ENCODE measurements at regions of chr12 and their contacts with region 1.

Region 1: GRCh38 chr12:14716848-14717444 is 20.5 kb upstream of the GUCY2C start:
- DNase-seq: no peak
- H3K4me3 ChIP-seq: no peak overlapping the region
- H3K27ac ChIP-seq: no peak overlapping the region
- H3K4me1 ChIP-seq: peaks cover 0 to 11% (median 5%) of the 10 kb centered on the region in 4 donors
- H3K27me3 ChIP-seq: no peaks in the 10 kb centered on the region
- CTCF ChIP-seq: peak in 3 of 4 experiments; percentile 31 to 45 (median 40)
- EP300 ChIP-seq: no peak
- POLR2A ChIP-seq: no peak

Region 2: DNA sequence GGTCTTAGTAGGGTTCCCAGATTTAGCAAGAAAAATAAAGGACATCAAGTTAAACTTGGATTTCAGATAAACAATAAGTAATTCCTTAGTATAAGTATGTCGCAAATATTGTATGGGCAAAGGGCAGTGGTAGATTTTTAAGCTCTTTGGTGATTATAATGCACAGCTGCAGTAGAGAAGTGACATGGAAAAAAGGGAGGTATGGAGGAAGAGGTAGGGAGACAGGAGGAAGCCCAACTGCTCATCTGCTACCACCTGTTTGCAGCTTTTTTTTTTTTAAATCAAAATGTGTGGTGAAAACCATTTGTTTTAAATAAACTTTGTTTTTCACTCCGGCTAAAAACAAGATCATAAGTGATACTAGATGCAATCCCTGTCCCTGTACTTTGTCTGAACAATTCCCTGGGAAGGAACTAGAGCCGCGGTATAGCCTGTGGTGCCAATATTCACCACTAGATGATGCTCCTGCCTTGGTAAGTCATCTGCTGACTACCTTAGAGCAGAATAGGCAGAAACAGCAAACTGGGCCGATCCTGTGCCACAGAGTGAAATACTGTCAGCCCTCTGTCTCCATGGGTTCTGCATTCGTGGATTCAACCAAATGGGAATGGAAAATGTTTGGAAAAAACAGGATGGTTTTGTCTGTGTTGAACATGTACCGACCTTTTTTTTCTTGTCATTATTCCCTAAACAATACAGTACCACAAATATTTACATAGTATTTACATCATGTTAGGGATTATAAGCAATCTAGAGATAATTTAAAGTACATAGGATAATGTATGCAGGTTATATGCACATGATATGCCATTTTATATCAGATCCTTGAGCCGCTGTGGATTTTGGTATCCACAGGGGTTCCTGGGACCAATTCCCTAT is 86.9 kb before region 1 on chr12:
- intact Hi-C with region 1: loop called (anchors 2 kb)
- DNase-seq: peak; percentile 78
- H3K4me3 ChIP-seq: no peak overlapping the region
- H3K27ac ChIP-seq: no peak overlapping the region
- H3K4me1 ChIP-seq: peaks cover 0 to 3% (median 0%) of the 10 kb centered on the region in 4 donors
- H3K27me3 ChIP-seq: no peaks in the 10 kb centered on the region
- CTCF ChIP-seq: peak; percentile 93 to 98 (median 97)
- EP300 ChIP-seq: no peak
- POLR2A ChIP-seq: no peak

Region 3: DNA sequence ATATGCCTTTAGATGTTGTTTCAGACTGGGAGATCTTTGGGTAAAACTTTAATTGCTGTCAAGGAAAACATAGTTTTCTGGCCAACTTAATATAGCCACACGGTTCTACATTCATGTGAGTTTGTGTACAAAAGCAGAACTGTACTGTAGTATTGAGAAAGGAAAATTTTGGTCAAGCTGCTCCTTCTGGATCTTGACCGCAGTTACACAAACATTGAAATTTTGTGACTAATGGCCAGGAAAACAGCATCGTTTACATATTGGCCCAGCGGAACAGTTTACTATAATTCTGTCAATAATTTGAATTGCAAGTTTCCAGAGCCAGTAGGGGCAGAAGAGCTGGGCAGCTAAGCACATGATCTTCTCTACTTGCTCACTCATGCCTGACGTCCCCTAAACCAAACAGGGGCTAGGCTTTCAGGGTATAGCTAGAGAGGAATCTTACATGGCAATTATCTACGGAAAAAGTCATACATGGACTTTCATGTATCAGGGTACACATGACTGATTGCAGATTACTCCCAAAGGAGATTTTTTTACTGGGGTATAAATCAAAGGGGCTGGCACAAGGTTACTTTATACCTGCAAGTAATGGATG is 137.7 kb after region 1 on chr12:
- intact Hi-C with region 1: no loop called
- DNase-seq: no peak
- H3K4me3 ChIP-seq: no peak overlapping the region
- H3K27ac ChIP-seq: peak overlapping the region in 1 of 4 donors; percentile 15
- H3K4me1 ChIP-seq: peaks cover 0 to 9% (median 0%) of the 10 kb centered on the region in 4 donors
- H3K27me3 ChIP-seq: no peaks in the 10 kb centered on the region
- CTCF ChIP-seq: no peak
- EP300 ChIP-seq: no peak
- POLR2A ChIP-seq: no peak

Measured in sigmoid colon (tissue), 7 donors.